ENCODE measurements at regions of chr5 and their contacts with region 1.

Region 1: GRCh38 chr5:1235379-1235778 is 10.2 kb downstream of the SLC6A18 start:
- DNase-seq: no peak
- ATAC-seq: no peak; the same call in 1 of the 2 replicates
- H3K4me3 Mint-ChIP-seq: no peak overlapping the region
- H3K27ac Mint-ChIP-seq: no peak overlapping the region
- H3K4me1 Mint-ChIP-seq: no peaks in the 10 kb centered on the region
- H3K27me3 Mint-ChIP-seq: no peaks in the 10 kb centered on the region
- CTCF ChIP-seq: no peak

Region 2: DNA sequence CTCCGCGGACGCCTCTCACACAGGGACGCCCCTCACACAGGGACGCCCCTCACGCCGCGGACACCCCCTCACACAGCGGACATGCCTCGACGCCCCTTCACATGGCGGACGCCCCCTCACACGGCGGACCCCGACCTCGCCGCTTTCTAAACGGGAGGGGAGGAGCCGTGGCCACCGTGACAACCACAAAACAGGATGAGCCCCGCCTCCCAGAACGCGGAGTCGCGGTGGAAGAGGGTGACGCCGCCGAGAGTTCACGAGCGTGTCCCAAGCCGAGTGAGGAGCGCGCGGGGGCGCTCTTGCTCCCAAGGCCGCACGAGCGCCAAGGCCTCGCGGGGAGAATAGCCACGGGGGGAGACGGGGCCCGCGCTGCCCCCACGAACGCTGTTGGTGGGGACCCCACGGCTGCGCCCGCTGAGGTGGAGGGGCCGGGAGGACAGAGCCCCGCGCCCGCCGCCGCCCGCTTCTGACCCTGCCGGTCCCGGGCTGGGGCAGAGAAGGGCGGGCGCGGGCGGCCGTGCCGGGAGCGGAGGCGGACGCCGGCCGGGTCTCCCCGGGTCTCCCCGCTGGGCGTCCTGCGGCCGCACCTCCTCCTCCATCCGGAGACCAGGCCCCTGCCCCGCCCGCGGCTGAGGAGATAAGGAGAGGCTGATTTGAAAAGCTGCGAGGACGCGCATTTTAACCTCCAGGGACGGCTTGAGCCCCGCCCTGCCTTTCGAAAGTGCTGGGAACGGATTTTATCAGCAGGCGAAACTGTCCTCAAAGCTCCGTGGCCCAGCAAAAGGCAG is 230.7 kb before region 1 on chr5:
- CTCF ChIA-PET with region 1: no interaction called
- POLR2A ChIA-PET with region 1: no interaction called
- DNase-seq: peak; percentile 59
- ATAC-seq: peak; percentile 31
- H3K4me3 Mint-ChIP-seq: peak overlapping the region; percentile 62
- H3K27ac Mint-ChIP-seq: no peak overlapping the region
- H3K4me1 Mint-ChIP-seq: peaks cover 11% of the 10 kb centered on the region
- H3K27me3 Mint-ChIP-seq: peaks cover 51% of the 10 kb centered on the region
- CTCF ChIP-seq: no peak

Region 3: GRCh38 chr5:1204693-1205242 is 30.6 kb before region 1 on chr5:
- CTCF ChIA-PET with region 1: interaction called, 12 read pairs
- POLR2A ChIA-PET with region 1: no interaction called
- DNase-seq: peak; percentile 31
- ATAC-seq: peak; percentile 66
- H3K4me3 Mint-ChIP-seq: no peak overlapping the region
- H3K27ac Mint-ChIP-seq: no peak overlapping the region
- H3K4me1 Mint-ChIP-seq: peaks cover 7% of the 10 kb centered on the region; the same call in 1 of the 2 replicates
- H3K27me3 Mint-ChIP-seq: no peaks in the 10 kb centered on the region
- CTCF ChIP-seq: no peak